Sigmoid colon (tissue), 7 donors: ENCODE measurements at regions of chrX and their contacts with region 1.

Region 1: DNA sequence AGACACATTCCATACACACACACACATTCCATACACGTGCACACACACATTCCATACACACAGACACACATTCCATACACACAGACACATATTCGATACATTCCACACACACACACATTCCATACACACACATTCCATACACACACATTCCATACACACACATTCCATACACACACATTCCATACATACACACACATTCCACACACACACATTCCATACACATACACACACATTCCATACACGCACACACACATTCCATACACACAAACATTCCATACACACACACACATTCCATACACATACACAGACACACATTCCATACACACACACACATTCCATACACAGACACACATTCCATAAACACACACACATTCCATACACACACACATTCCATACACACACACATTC is 13.7 kb downstream of the LINC00632 start:
- DNase-seq: no peak
- H3K4me3 ChIP-seq: no peak overlapping the region
- H3K27ac ChIP-seq: no peak overlapping the region
- H3K4me1 ChIP-seq: no peaks in the 10 kb centered on the region
- H3K27me3 ChIP-seq: no peaks in the 10 kb centered on the region
- CTCF ChIP-seq: no peak
- EP300 ChIP-seq: no peak
- POLR2A ChIP-seq: no peak

Region 2: DNA sequence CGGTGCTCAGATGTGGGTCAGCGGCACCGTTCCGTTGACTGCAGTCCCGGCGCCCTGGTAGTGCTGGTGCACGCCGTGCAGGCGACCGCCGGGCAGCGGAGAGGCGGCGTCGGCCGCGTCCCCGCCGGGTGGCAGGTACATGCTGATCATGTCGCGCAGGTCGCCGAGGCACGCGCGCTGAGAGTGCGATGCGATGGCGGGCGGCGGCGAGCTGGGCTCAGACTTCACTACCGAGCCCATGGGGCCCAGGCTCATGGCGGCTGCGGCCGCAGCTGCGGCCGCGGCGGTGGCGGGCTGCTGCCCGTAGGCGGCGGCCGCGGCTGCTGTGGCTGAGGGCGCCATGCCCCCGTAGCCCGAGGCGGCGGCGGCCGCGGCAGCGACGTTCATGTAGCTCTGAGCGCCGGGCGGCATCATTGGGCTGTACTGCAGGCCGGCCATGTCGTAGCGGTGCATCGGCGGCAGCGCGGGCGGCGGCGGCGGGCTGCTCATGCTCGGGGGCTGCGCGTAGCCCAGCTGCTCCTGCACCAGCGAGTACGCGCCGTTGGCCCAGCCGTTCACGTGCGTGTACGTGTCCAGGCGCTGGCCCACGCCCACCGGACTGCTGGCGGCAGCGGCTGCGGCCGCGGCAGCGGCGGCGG is 219.4 kb before region 1 on chrX:
- intact Hi-C with region 1: loop called (anchors 10 kb)
- DNase-seq: no peak
- H3K4me3 ChIP-seq: peak overlapping the region in 3 of 4 donors; percentile 30 to 45 (median 38)
- H3K27ac ChIP-seq: no peak overlapping the region
- H3K4me1 ChIP-seq: peaks cover 0 to 35% (median 28%) of the 10 kb centered on the region in 4 donors
- H3K27me3 ChIP-seq: peaks cover 64 to 96% (median 67%) of the 10 kb centered on the region in 3 donors
- CTCF ChIP-seq: no peak
- EP300 ChIP-seq: no peak
- POLR2A ChIP-seq: no peak